ENCODE measurements at regions of chr6 and their contacts with region 1.

Region 1: DNA sequence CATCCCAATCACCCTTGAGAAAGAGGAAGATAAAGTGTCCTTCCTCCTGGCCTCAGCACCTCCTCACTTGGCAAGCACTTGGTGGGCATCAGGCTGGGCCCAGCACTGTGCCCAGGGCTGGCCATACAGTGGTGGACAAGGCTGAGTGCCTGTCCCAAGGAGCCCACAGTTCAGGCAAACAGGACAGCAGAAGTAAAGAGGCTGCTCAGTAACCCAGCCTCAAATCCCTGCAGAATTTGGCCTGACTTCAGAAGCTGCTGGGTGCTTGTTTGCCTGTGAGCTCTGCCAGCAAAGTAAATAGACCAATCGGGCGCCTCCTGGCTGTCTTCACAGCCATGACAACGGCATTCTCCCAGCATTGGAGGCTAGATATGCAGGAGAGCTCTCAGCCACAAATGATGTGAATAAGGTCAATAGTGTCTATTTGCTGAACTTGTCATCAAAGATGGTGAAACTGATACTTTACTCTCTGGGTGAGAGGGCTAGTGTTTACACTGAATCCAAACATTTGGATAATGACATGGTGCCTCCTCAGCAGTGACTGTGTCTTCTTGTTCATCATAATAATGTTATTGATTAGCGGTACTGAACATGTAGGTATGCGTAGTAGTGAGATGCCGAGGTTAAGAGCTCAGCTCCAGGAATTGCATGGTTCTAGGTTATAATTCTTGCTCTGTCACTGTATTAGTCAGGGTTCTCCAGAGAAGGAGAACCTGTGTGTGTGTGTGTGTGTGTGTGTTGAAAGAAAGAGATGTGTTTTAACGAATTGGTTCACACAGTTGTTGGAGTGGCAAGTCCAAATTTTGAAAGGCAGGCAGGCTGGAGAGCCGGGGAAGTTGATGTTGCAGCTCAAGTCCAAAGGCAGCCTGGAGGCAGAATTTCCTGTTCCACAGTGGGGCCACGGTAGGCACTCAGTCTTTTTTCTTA is 36.8 kb upstream of the FANCE start:
- DNase-seq: peak; percentile 83
- H3K4me3 ChIP-seq: no peak overlapping the region
- H3K27ac ChIP-seq: peak overlapping the region; percentile 77
- H3K27me3 ChIP-seq: no peaks in the 10 kb centered on the region
- CTCF ChIP-seq: peak; percentile 62

Region 2: DNA sequence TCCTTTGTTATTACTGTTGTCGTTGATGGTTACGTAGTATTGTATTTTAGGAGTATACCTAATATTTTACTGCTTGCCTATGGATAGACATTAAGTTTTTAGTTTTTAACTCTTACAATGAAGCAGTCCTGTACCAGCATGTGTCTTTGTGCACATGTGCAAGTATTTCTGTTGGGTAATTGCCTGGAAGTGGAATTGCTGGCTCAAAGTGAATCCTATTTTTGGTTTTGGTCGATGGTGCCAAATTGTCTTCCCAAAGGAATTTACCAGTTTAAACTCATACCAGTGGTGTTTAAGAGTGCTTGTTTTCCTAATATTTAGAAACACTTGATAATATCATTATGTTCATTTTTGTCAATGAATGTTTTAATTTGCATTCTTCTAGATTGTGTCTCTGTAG is 450.8 kb before region 1 on chr6:
- CTCF ChIA-PET with region 1: no interaction called
- POLR2A ChIA-PET with region 1: no interaction called
- DNase-seq: no peak
- H3K4me3 ChIP-seq: no peak overlapping the region
- H3K27ac ChIP-seq: no peak overlapping the region
- H3K27me3 ChIP-seq: no peaks in the 10 kb centered on the region
- CTCF ChIP-seq: no peak

Region 3: GRCh38 chr6:35218021-35218420 is 197.3 kb before region 1 on chr6:
- CTCF ChIA-PET with region 1: no interaction called
- POLR2A ChIA-PET with region 1: no interaction called
- DNase-seq: no peak
- H3K4me3 ChIP-seq: no peak overlapping the region
- H3K27ac ChIP-seq: no peak overlapping the region
- H3K27me3 ChIP-seq: peaks cover 2% of the 10 kb centered on the region
- CTCF ChIP-seq: no peak

Region 4: GRCh38 chr6:35342258-35343091 is 72.9 kb before region 1 on chr6 and contains the start of gene PPARD:
- CTCF ChIA-PET with region 1: interaction called, 27 read pairs
- POLR2A ChIA-PET with region 1: interaction called, 16 read pairs
- DNase-seq: peak; percentile 87
- H3K4me3 ChIP-seq: peak within 1 kb of the TSS; percentile 71
- H3K27ac ChIP-seq: peak within 1 kb of the TSS; percentile 11
- H3K27me3 ChIP-seq: peaks cover 3% of the 10 kb centered on the region
- CTCF ChIP-seq: peak; percentile 99
- polyA plus RNA-seq, gene PPARD: 26.9 and 32.9 TPM in 2 replicates

Region 5: DNA sequence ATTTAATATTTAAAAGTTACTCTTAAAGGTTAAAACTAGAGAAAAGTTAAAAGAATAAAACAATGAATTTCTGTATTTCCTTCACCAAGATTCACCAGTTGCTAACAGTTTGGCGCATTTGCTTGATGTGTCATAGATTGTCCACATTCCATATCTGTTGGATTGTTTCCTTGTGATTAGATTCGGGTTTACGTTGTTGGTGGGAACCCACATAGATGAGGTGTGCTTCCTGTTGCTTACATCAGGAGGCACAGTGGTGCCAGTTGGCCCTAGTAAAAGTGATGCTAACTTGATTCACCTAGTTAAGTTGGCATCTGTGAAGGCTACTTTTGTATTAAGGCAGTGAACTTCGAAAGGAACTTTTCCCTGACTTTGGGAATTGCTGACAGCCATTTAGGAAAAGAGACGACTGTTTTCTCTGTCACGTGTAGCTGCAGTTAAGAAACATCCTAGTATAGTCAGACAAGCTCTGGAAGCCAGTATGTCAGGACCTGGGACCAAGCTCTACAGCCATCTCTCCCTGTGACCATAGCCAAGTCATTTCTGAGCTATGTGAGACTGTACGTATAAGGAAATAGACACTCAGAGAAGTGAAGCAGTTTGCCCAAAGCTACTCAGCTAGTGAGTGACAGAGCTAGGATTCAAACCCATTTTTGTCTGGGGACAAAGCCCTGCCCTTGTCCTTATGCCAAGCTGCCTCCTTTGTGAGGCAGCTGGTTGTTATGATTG is 23.9 kb before region 1 on chr6:
- CTCF ChIA-PET with region 1: interaction called, 17 read pairs
- POLR2A ChIA-PET with region 1: interaction called, 7 read pairs
- DNase-seq: peak; percentile 85
- H3K4me3 ChIP-seq: no peak overlapping the region
- H3K27ac ChIP-seq: peak overlapping the region; percentile 95
- H3K27me3 ChIP-seq: no peaks in the 10 kb centered on the region
- CTCF ChIP-seq: peak; percentile 38

Region 6: GRCh38 chr6:35402136-35402855 is 13.0 kb before region 1 on chr6:
- CTCF ChIA-PET with region 1: interaction called, 18 read pairs
- POLR2A ChIA-PET with region 1: no interaction called
- DNase-seq: no peak
- H3K4me3 ChIP-seq: no peak overlapping the region
- H3K27ac ChIP-seq: no peak overlapping the region
- H3K27me3 ChIP-seq: no peaks in the 10 kb centered on the region
- CTCF ChIP-seq: no peak

Region 7: GRCh38 chr6:35427851-35428321 is 12.6 kb after region 1 on chr6:
- CTCF ChIA-PET with region 1: interaction called, 13 read pairs
- POLR2A ChIA-PET with region 1: interaction called, 17 read pairs
- DNase-seq: peak; percentile 81
- H3K4me3 ChIP-seq: peak overlapping the region; percentile 29; the same call in 1 of the 2 replicates
- H3K27ac ChIP-seq: peak overlapping the region; percentile 96
- H3K27me3 ChIP-seq: no peaks in the 10 kb centered on the region
- CTCF ChIP-seq: no peak

Region 8: DNA sequence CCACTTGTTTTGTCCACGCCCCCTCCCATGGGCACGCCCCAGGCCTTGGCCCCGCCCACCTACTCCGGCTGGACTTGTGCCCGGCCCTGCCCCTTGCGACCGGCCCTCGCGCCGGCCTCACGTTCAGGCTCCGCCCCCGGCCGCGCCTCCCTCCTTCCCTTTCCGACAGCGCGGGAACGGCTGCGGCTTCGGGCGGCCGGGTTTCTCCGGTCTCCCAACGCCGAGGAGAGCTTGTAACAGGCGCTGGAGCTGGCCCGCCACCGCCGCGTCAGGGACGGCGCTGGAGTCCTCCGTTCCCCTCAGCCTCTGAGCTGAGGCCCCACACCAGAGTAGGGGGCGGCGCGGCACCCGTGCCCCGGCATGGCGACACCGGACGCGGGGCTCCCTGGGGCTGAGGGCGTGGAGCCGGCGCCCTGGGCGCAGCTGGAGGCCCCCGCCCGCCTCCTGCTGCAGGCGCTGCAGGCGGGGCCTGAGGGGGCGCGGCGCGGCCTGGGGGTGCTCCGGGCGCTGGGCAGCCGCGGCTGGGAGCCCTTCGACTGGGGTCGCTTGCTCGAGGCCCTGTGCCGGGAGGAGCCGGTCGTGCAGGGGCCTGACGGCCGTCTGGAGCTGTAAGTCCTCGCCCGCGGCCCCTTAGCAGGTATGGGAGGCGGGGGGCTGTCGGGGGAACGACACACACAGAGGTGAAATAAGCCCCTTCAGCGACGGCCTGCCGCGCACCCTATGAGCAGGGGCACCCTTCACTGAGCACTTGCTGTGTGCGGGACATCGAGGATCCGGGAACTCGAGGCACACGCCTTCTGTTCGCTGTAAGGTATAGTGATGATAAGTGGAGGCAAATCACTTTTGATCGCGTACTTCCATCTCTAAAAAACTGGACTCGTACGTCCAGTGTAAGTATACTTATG is 37.1 kb after region 1 on chr6 and contains the start of gene FANCE:
- CTCF ChIA-PET with region 1: interaction called, 73 read pairs
- POLR2A ChIA-PET with region 1: interaction called, 4 read pairs
- DNase-seq: peak; percentile 74
- H3K4me3 ChIP-seq: peak within 1 kb of the TSS; percentile 75
- H3K27ac ChIP-seq: no peak within 1 kb of the TSS
- H3K27me3 ChIP-seq: no peaks in the 10 kb centered on the region
- CTCF ChIP-seq: no peak
- polyA plus RNA-seq, gene FANCE: 7.0 and 7.1 TPM in 2 replicates

Region 9: DNA sequence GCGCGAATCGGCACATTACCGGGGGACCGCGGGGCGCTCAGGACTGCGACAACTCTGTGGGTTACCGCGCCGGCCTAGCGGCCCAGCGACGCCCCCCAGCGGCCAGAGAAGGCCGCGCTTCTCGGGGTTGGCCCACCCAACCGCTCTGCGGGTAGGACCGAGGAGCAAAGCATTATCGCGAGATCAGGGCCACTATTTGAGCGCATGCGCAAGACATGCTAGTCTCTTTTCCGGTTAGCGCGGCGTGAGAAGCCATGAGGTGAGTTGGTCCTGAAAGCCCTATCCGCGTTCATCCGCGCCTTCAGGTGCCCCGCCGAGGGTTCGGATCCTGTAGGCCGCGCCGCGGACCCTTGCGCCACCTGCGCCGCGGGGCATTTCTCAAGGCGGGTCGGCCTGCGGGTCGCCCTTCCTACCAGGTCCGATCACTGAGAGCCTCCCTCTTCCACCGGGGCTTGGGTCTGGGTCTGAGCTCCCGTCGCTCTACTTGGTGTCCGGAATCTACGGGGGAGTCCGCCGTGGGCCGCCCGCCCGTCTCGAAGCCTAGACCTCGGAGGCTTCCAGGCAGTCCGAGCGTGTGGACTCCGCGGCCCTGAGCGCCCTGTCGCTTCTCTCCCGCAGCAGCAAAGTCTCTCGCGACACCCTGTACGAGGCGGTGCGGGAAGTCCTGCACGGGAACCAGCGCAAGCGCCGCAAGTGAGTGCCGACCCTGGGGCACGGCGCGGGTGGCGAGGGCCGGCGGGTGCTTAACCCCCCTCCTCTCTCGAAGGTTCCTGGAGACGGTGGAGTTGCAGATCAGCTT is 53.1 kb after region 1 on chr6 and contains the start of gene RPL10A:
- CTCF ChIA-PET with region 1: interaction called, 11 read pairs
- POLR2A ChIA-PET with region 1: interaction called, 5 read pairs
- DNase-seq: peak; percentile 92
- H3K4me3 ChIP-seq: peak within 1 kb of the TSS; percentile 93
- H3K27ac ChIP-seq: peak within 1 kb of the TSS; percentile 86
- H3K27me3 ChIP-seq: no peaks in the 10 kb centered on the region
- CTCF ChIP-seq: peak; percentile 94
- polyA plus RNA-seq, gene RPL10A: 2,636 and 2,921 TPM in 2 replicates

Region 10: DNA sequence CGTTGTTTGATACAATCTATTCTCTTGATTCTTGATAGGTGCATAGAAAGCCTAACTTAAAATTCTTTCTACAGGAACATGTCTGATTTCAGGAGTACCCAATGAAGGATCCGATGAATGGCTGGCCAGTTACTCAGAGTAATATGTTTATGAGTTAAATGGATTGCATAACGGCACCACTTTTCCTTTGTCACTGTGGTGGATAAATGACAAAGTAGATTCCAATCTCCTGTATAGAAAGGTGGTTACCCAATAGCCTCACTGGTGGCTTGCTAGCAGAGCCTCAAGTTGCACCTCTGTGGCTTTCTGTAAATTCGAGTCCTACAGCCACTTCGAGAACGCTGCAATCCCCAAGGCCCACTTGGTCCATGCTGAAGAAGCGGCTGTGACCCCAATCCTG is 418.2 kb after region 1 on chr6:
- CTCF ChIA-PET with region 1: no interaction called
- POLR2A ChIA-PET with region 1: no interaction called
- DNase-seq: no peak
- H3K4me3 ChIP-seq: no peak overlapping the region
- H3K27ac ChIP-seq: no peak overlapping the region
- H3K27me3 ChIP-seq: no peaks in the 10 kb centered on the region
- CTCF ChIP-seq: no peak